PC-9 (cell line): ENCODE measurements at regions of chr14 and their contacts with region 1.

Region 1: GRCh38 chr14:55129428-55130195 is 560 bp downstream of the LGALS3 start:
- DNase-seq: peak; percentile 53 to 57
- H3K4me3 ChIP-seq: peak overlapping the region; percentile 77
- H3K27ac ChIP-seq: peak overlapping the region; percentile 72
- H3K4me1 ChIP-seq: peaks cover 58% of the 10 kb centered on the region
- H3K27me3 ChIP-seq: no peaks in the 10 kb centered on the region
- CTCF ChIP-seq: no peak

Region 2: GRCh38 chr14:55071870-55072640 is 57.6 kb before region 1 on chr14:
- CTCF ChIA-PET with region 1: no interaction called
- POLR2A ChIA-PET with region 1: interaction called, 10 read pairs
- intact Hi-C with region 1: no loop called
- DNase-seq: no peak
- H3K4me3 ChIP-seq: no peak overlapping the region
- H3K27ac ChIP-seq: no peak overlapping the region
- H3K4me1 ChIP-seq: peaks cover 1% of the 10 kb centered on the region; the same call in 1 of the 2 replicates
- H3K27me3 ChIP-seq: no peaks in the 10 kb centered on the region
- CTCF ChIP-seq: no peak

Region 3: DNA sequence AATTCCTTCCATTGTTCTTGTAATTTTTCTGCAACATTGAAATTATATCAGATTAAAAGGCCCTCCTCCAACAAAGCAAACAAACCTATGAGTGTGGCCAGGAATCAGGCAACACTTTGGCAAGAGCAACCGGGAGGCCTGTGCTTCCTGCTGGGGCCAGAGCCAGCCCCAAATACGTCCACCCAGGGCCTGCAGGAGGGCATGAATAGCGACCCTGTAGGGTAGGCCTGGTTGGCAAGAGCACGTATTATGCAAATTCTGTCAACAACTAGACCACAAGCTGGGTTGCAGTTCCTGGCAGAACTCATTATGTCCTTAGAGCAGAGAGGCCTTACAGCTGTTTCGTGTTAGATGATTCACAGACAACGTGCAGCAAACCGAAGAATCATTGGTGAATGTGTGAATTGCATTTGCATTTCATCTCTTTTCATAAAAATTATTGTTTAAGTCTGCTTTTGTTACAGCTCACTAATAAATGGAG is 27.4 kb before region 1 on chr14:
- CTCF ChIA-PET with region 1: interaction called, 3 read pairs
- POLR2A ChIA-PET with region 1: interaction called, 9 read pairs
- intact Hi-C with region 1: loop called (anchors 1 kb)
- DNase-seq: peak; percentile 89 to 97
- H3K4me3 ChIP-seq: peak overlapping the region; percentile 52; the same call in 1 of the 2 replicates
- H3K27ac ChIP-seq: peak overlapping the region; percentile 99
- H3K4me1 ChIP-seq: peaks cover 73% of the 10 kb centered on the region
- H3K27me3 ChIP-seq: no peaks in the 10 kb centered on the region
- CTCF ChIP-seq: no peak